GM12878 (cell line): ENCODE measurements at regions of chr17 and their contacts with region 1.

Region 1: GRCh38 chr17:16285957-16286640 is 67.2 kb downstream of the CENPV start:
- DNase-seq: peak; percentile 96
- ATAC-seq: peak; percentile 89
- H3K4me3 ChIP-seq: peak overlapping the region; percentile 53; the same call in 1 of the 2 replicates
- H3K27ac ChIP-seq: peak overlapping the region; percentile 92
- H3K4me1 ChIP-seq: peaks cover 40% of the 10 kb centered on the region
- H3K27me3 ChIP-seq: no peaks in the 10 kb centered on the region
- CTCF ChIP-seq: peak; percentile 58 to 65 (median 63)
- EP300 ChIP-seq: peak in 1 of 2 experiments; percentile 26; a peak in 1 of 4 replicates
- POLR2A ChIP-seq: peak; percentile 85
- RAD21 ChIP-seq: peak; percentile 59

Region 2: GRCh38 chr17:16215273-16215964 is 70.7 kb before region 1 on chr17 and contains the start of gene NCOR1:
- CTCF ChIA-PET with region 1: interaction called, 16 read pairs
- POLR2A ChIA-PET with region 1: interaction called, 7 read pairs
- RAD21 ChIA-PET with region 1: interaction called, 12 read pairs
- SMC1A ChIA-PET with region 1: interaction called, 23 read pairs
- in situ Hi-C with region 1: no loop called
- intact Hi-C with region 1: loop called (anchors 1 kb)
- DNase-seq: no peak
- ATAC-seq: peak; percentile 90
- H3K4me3 ChIP-seq: peak within 1 kb of the TSS; percentile 91
- H3K27ac ChIP-seq: peak within 1 kb of the TSS; percentile 96
- H3K4me1 ChIP-seq: peaks cover 4% of the 10 kb centered on the region
- H3K27me3 ChIP-seq: no peaks in the 10 kb centered on the region
- CTCF ChIP-seq: peak; percentile 13 to 38 (median 33); a peak in 3 of 6 replicates
- EP300 ChIP-seq: no peak
- POLR2A ChIP-seq: peak; percentile 97
- RAD21 ChIP-seq: peak; percentile 33
- polyA plus RNA-seq, gene NCOR1: 34.5 to 55.1 TPM

Region 3: GRCh38 chr17:16297367-16298139 is 11.5 kb after region 1 on chr17:
- CTCF ChIA-PET with region 1: interaction called, 30 read pairs
- POLR2A ChIA-PET with region 1: interaction called, 8 read pairs
- RAD21 ChIA-PET with region 1: interaction called, 6 read pairs
- SMC1A ChIA-PET with region 1: interaction called, 9 read pairs
- in situ Hi-C with region 1: no loop called
- intact Hi-C with region 1: no loop called
- DNase-seq: no peak
- ATAC-seq: no peak
- H3K4me3 ChIP-seq: no peak overlapping the region
- H3K27ac ChIP-seq: no peak overlapping the region
- H3K4me1 ChIP-seq: no peaks in the 10 kb centered on the region
- H3K27me3 ChIP-seq: no peaks in the 10 kb centered on the region
- CTCF ChIP-seq: no peak
- EP300 ChIP-seq: no peak
- POLR2A ChIP-seq: no peak
- RAD21 ChIP-seq: no peak

Region 4: GRCh38 chr17:16353317-16354174 is 67.4 kb after region 1 on chr17 and contains the start of gene CENPV:
- CTCF ChIA-PET with region 1: interaction called, 38 read pairs
- POLR2A ChIA-PET with region 1: interaction called, 8 read pairs
- RAD21 ChIA-PET with region 1: interaction called, 8 read pairs
- SMC1A ChIA-PET with region 1: interaction called, 28 read pairs
- in situ Hi-C with region 1: no loop called
- intact Hi-C with region 1: loop called (anchors 2 kb)
- DNase-seq: no peak
- ATAC-seq: peak; percentile 75
- H3K4me3 ChIP-seq: peak within 1 kb of the TSS; percentile 83
- H3K27ac ChIP-seq: peak within 1 kb of the TSS; percentile 61
- H3K4me1 ChIP-seq: peaks cover 3% of the 10 kb centered on the region; the same call in 1 of the 2 replicates
- H3K27me3 ChIP-seq: no peaks in the 10 kb centered on the region
- CTCF ChIP-seq: peak in 1 of 3 experiments; percentile 36; a peak in 2 of 6 replicates
- EP300 ChIP-seq: no peak
- POLR2A ChIP-seq: peak; percentile 76
- RAD21 ChIP-seq: peak; percentile 11; the same call in 1 of the 2 replicates
- polyA plus RNA-seq, gene CENPV: 22.5 to 68.0 TPM

Region 5: DNA sequence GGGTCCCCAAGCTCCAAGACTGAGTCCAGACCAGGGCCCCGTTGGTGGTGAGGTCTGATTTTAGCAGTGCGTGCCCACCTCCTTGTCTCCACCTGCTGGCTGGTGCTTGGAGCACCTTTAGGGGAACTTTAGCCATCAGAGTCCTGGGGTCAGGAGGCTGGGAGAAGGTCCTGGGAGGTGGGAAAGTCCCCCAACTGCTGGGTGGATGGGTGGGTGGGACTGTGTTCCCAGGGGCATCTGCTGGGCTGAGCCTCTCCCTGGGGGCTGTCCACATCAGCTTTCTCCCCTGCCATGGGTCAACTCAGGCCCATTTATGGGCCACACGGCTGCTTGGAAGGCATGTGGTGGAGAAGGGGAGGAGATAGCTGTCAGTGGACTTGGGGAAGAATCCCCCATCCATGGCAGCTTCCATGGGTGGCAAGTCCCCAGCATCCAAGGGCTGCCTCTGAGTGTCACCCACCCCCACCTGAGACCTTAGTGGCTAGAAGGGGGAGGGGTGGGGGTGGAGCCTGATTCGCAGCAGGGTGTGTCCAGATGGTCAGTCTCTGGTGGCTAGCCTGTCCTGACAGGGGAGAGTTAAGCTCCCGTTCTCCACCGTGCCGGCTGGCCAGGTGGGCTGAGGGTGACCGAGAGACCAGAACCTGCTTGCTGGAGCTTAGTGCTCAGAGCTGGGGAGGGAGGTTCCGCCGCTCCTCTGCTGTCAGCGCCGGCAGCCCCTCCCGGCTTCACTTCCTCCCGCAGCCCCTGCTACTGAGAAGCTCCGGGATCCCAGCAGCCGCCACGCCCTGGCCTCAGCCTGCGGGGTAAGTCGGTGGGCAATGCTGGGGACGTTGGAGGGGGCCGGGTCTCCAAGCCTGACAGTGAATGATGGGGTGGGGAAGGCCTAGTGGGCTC is 129.2 kb after region 1 on chr17 and contains the start of gene TRPV2:
- CTCF ChIA-PET with region 1: interaction called, 21 read pairs
- POLR2A ChIA-PET with region 1: interaction called, 6 read pairs
- RAD21 ChIA-PET with region 1: interaction called, 30 read pairs
- SMC1A ChIA-PET with region 1: interaction called, 4 read pairs
- in situ Hi-C with region 1: no loop called
- intact Hi-C with region 1: loop called (anchors 2 kb)
- DNase-seq: peak; percentile 60
- ATAC-seq: peak; percentile 67
- H3K4me3 ChIP-seq: peak within 1 kb of the TSS; percentile 95
- H3K27ac ChIP-seq: peak within 1 kb of the TSS; percentile 81
- H3K4me1 ChIP-seq: peaks cover 46% of the 10 kb centered on the region
- H3K27me3 ChIP-seq: no peaks in the 10 kb centered on the region
- CTCF ChIP-seq: peak; percentile 87 to 91 (median 87)
- EP300 ChIP-seq: no peak
- POLR2A ChIP-seq: peak; percentile 64
- RAD21 ChIP-seq: peak; percentile 94
- polyA plus RNA-seq, gene TRPV2: 8.9 to 29.2 TPM